K562 (cell line): ENCODE measurements at regions of chr14 and their contacts with region 1.

Region 1: GRCh38 chr14:100078991-100079725 is 13.9 kb downstream of the EVL start:
- DNase-seq: peak; percentile 12 to 76 (median 36)
- ATAC-seq: peak; percentile 89
- H3K4me3 ChIP-seq: no peak overlapping the region
- H3K27ac ChIP-seq: peak overlapping the region; percentile 6; the same call in 2 of the 3 replicates
- H3K4me1 ChIP-seq: peaks cover 31 to 39% of the 10 kb centered on the region in 2 experiments
- H3K27me3 ChIP-seq: no peaks in the 10 kb centered on the region
- CTCF ChIP-seq: peak in 2 of 3 experiments; percentile 48 to 64; a peak in 4 of 6 replicates
- EP300 ChIP-seq: no peak
- POLR2A ChIP-seq: no peak
- RAD21 ChIP-seq: peak; percentile 40 to 58

Region 2: DNA sequence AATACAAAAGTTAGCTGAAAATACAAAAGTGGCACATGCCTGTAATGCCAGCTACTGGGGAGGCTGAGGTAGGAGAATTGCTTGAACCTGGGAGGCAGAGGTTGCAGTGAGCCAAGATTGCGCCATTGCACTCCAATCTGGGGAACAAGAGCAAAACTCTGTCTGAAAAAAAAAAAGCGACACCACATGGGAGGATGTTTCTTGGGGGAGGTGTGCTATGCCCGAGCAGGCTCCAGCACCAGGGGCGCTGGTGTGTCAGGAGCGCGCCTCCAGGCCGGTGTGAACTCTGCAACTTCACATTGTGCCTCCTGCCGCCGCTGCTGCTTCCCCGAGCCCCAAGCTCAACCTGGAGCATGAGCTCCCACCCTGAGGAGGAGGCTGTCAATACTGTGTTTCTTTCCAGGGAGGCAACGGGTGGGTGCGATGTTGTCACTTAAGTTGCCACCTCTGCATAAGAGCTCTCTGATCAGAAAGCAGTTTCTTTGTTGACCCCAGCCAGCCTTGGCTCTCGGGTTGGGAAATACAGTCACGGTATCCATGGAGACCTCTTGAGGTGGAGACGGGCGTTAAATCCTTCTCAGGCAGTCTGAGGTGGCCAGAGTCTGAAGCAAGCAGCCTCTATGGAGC is 61.4 kb after region 1 on chr14:
- CTCF ChIA-PET with region 1: no interaction called
- POLR2A ChIA-PET with region 1: interaction called, 3 read pairs
- in situ Hi-C with region 1: no loop called
- intact Hi-C with region 1: loop called (anchors 5 kb)
- DNase-seq: peak; percentile 71 to 89 (median 78)
- ATAC-seq: peak; percentile 79
- H3K4me3 ChIP-seq: peak overlapping the region; percentile 28; the same call in 1 of the 2 replicates
- H3K27ac ChIP-seq: peak overlapping the region; percentile 98
- H3K4me1 ChIP-seq: peaks cover 36 to 71% of the 10 kb centered on the region in 2 experiments
- H3K27me3 ChIP-seq: no peaks in the 10 kb centered on the region
- CTCF ChIP-seq: peak; percentile 79 to 97 (median 88)
- EP300 ChIP-seq: peak; percentile 19; the same call in 1 of the 2 replicates
- POLR2A ChIP-seq: peak; percentile 41; the same call in 1 of the 2 replicates
- RAD21 ChIP-seq: peak; percentile 33 to 61

Region 3: DNA sequence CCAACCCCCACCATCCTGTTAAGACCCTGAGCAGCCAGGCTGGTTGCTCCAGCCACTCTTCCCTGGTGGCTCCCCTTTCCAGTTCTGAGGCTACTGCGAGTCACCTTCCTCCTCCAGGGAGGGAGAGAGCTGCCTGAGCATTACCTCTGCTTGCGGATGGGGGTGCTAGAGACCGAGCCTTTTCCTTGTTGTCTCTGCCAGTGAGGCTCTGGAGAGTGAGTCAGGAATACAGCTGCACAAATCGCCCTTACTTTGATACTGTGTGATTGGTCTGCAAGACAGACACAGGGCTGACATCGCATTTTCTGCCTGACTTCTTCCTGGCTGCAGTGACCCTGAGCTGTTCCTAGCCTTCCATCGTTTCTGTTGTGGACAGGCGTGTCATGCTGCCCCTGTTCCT is 338.3 kb after region 1 on chr14:
- CTCF ChIA-PET with region 1: no interaction called
- POLR2A ChIA-PET with region 1: no interaction called
- in situ Hi-C with region 1: no loop called
- intact Hi-C with region 1: no loop called
- DNase-seq: peak; percentile 63 to 81 (median 71)
- ATAC-seq: peak; percentile 98
- H3K4me3 ChIP-seq: no peak overlapping the region
- H3K27ac ChIP-seq: peak overlapping the region; percentile 48; the same call in 2 of the 3 replicates
- H3K4me1 ChIP-seq: peaks cover 9 to 14% of the 10 kb centered on the region in 2 experiments; a peak in 3 of 5 replicates
- H3K27me3 ChIP-seq: no peaks in the 10 kb centered on the region
- CTCF ChIP-seq: peak; percentile 80 to 89 (median 88)
- EP300 ChIP-seq: peak; percentile 29; the same call in 1 of the 2 replicates
- POLR2A ChIP-seq: no peak
- RAD21 ChIP-seq: peak; percentile 78 to 84